ENCODE measurements at regions of chr15 and their contacts with region 1.

Region 1: DNA sequence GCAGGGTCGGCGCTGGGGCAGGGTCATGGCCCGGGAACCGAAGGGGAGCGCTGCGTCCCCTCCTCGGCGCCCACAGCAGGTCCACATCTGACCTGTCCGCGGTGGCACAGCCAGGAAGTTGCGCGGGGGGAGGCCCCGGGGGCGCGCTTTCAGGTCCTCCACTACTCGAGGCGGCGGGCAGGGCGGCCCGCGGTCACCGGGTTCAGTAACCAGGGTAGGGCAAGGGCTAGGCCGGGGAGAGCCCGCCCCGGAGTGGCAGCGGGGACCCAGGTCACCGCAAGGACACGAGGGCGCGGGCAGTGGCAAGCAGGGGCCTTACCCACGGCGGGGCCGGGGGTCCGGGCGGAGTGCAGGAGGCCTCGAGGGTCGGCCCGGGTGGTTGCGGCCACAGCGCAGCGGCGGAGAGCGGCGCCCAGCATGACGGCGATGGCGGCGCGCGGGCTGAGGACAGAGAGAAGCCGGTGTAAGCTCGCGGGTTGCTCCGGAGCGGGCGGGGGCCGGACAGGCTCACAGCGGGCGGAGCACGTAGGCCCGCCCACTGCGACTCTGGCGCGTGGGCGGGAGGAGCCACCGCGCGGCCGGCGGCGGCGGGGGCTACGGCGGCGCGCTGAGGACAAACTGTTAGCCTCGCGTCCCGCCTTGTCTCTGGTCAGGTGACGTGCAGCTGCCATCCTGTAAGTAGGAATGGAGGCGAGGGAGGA is at the start of gene COX5A:
- DNase-seq: peak; percentile 92 to 95 (median 93)
- H3K4me3 ChIP-seq: peak within 1 kb of the TSS; percentile 41 to 96
- H3K4me3 Mint-ChIP-seq: peak within 1 kb of the TSS; percentile 88 to 95 (median 94)
- H3K27ac ChIP-seq: peak within 1 kb of the TSS; percentile 79
- H3K27ac Mint-ChIP-seq: peak within 1 kb of the TSS; percentile 88 to 96 (median 92)
- H3K4me1 ChIP-seq: peaks cover 38% of the 10 kb centered on the region
- H3K4me1 Mint-ChIP-seq: peaks cover 21 to 40% (median 28%) of the 10 kb centered on the region in 4 donors
- H3K27me3 ChIP-seq: no peaks in the 10 kb centered on the region
- H3K27me3 Mint-ChIP-seq: no peaks in the 10 kb centered on the region
- total RNA-seq, gene COX5A: 66.8 to 74.4 TPM

Region 2: GRCh38 chr15:74615508-74616365 is 322.0 kb before region 1 on chr15 and contains the start of gene CLK3:
- CTCF ChIA-PET with region 1: no interaction called
- POLR2A ChIA-PET with region 1: interaction called, 12 read pairs
- intact Hi-C with region 1: loop called (anchors 1 kb)
- DNase-seq: peak; percentile 95 to 97 (median 96)
- H3K4me3 ChIP-seq: peak within 1 kb of the TSS; percentile 98 to 100
- H3K4me3 Mint-ChIP-seq: peak within 1 kb of the TSS; percentile 92 to 98 (median 94)
- H3K27ac ChIP-seq: peak within 1 kb of the TSS; percentile 99
- H3K27ac Mint-ChIP-seq: peak within 1 kb of the TSS; percentile 98 to 99 (median 98)
- H3K4me1 ChIP-seq: peaks cover 44% of the 10 kb centered on the region
- H3K4me1 Mint-ChIP-seq: peaks cover 28 to 59% (median 31%) of the 10 kb centered on the region in 4 donors
- H3K27me3 ChIP-seq: no peaks in the 10 kb centered on the region
- H3K27me3 Mint-ChIP-seq: no peaks in the 10 kb centered on the region
- total RNA-seq, gene CLK3: 163 to 167 TPM

Region 3: DNA sequence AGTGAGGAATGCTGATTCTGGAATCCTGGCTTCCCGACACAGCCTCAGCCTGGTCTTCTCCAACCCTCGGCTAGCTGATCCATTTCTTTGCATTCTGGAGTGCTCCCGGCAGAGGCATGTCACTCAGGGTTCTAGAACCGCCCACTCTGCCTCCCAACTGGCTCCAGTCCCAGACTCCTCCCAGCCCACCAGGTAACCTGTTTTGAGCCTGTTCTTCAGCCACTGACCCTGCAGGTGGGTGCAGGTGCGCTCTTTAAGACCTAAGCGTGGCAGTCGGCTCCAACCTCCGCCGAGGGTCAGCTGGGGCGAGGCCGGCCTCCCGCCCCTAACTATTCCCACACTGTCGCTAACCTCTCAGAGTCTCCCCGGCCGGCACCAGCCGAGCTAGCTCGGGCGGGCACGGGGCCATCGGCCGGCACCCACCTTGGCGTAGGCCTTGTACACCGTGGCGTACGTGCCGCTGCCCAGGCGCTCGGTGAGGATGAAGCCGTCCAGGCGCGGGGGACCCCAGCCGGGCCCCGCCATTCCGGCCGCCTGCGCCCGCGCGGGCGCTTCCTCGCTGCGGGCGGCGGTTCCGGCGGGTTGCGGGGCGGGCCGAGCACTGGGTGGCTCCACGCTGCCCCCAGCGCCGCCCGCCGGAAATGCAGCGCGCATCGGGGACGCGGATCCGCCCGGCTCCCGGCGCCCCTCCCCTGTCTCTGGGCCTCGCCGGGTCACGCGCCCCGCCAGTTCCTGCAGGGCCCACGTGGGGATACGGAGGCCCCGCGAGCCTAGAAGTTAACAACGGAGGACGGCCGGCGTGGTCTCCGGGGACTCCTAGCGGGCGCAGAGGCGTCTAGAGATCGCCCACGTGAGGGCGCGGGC is 94.9 kb before region 1 on chr15 and contains the start of gene ULK3:
- CTCF ChIA-PET with region 1: interaction called, 4 read pairs
- POLR2A ChIA-PET with region 1: interaction called, 10 read pairs
- intact Hi-C with region 1: loop called (anchors 1 kb)
- DNase-seq: peak; percentile 92 to 94 (median 93)
- H3K4me3 ChIP-seq: peak within 1 kb of the TSS; percentile 81 to 83
- H3K4me3 Mint-ChIP-seq: peak within 1 kb of the TSS; percentile 87 to 92 (median 91)
- H3K27ac ChIP-seq: peak within 1 kb of the TSS; percentile 77
- H3K27ac Mint-ChIP-seq: peak within 1 kb of the TSS; percentile 91 to 97 (median 93)
- H3K4me1 ChIP-seq: peaks cover 52% of the 10 kb centered on the region
- H3K4me1 Mint-ChIP-seq: peaks cover 37 to 57% (median 46%) of the 10 kb centered on the region in 4 donors
- H3K27me3 ChIP-seq: no peaks in the 10 kb centered on the region
- H3K27me3 Mint-ChIP-seq: no peaks in the 10 kb centered on the region
- total RNA-seq, gene ULK3: 84.9 to 88.3 TPM

Region 4: GRCh38 chr15:74889883-74890664 is 47.7 kb before region 1 on chr15 and contains the start of gene MPI:
- CTCF ChIA-PET with region 1: interaction called, 3 read pairs
- POLR2A ChIA-PET with region 1: interaction called, 6 read pairs
- intact Hi-C with region 1: loop called (anchors 5 kb)
- DNase-seq: peak; percentile 78 to 86 (median 79)
- H3K4me3 ChIP-seq: peak within 1 kb of the TSS; percentile 94 to 99
- H3K4me3 Mint-ChIP-seq: peak within 1 kb of the TSS; percentile 87 to 97 (median 94)
- H3K27ac ChIP-seq: peak within 1 kb of the TSS; percentile 78
- H3K27ac Mint-ChIP-seq: peak within 1 kb of the TSS; percentile 80 to 97 (median 94)
- H3K4me1 ChIP-seq: peaks cover 58% of the 10 kb centered on the region
- H3K4me1 Mint-ChIP-seq: peaks cover 30 to 54% (median 42%) of the 10 kb centered on the region in 4 donors
- H3K27me3 ChIP-seq: no peaks in the 10 kb centered on the region
- H3K27me3 Mint-ChIP-seq: no peaks in the 10 kb centered on the region
- total RNA-seq, gene MPI: 70.4 to 73.1 TPM

Region 5: DNA sequence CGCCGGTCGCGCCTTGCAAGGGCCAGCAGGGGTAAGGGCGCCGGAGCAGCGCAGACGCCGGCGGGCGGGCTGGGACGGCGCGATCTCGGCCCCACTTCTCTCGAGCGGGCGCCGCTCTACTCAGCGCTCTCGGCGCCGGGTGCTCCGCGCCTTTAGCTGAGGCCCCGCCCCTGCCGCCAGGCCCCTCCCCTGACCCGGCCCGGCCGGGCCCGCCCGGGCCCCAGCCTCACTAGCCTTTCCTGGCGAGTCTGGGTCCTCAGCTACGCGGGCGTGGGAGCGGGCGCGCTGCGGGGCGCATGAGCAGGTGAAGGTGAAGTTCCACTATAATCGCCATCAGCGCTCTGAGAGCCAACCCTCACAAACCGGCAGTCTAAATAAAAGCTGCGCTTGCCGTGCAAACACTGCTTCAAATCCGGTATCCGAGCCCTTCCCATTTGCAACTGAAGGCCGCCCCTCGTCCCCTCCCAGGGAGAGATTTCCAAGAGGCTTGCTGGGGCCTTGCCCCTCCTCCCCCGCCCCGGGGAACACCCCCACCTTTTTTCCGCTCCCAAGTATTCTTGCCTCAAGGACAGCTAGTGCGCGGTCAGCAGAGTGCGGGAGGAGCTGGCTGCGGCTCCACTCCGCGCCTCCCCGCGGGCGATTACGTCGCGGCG is 19.0 kb after region 1 on chr15 and contains the start of gene RPP25:
- CTCF ChIA-PET with region 1: interaction called, 4 read pairs
- POLR2A ChIA-PET with region 1: interaction called, 12 read pairs
- intact Hi-C with region 1: loop called (anchors 1 kb)
- DNase-seq: peak; percentile 43 to 56 (median 52)
- H3K4me3 ChIP-seq: peak within 1 kb of the TSS; percentile 12 to 68
- H3K4me3 Mint-ChIP-seq: peak within 1 kb of the TSS; percentile 75 to 82 (median 80)
- H3K27ac ChIP-seq: no peak within 1 kb of the TSS
- H3K27ac Mint-ChIP-seq: no peak within 1 kb of the TSS
- H3K4me1 ChIP-seq: peaks cover 40% of the 10 kb centered on the region
- H3K4me1 Mint-ChIP-seq: peaks cover 6 to 35% (median 19%) of the 10 kb centered on the region in 4 donors
- H3K27me3 ChIP-seq: peaks cover 19% of the 10 kb centered on the region
- H3K27me3 Mint-ChIP-seq: peaks cover 19 to 20% of the 10 kb centered on the region in 2 donors
- total RNA-seq, gene RPP25: 2.6 to 2.8 TPM

Region 6: GRCh38 chr15:75201609-75202250 is 264.0 kb after region 1 on chr15 and contains the start of gene C15orf39:
- CTCF ChIA-PET with region 1: interaction called, 3 read pairs
- POLR2A ChIA-PET with region 1: no interaction called
- intact Hi-C with region 1: loop called (anchors 1 kb)
- DNase-seq: peak; percentile 71 to 87 (median 83)
- H3K4me3 ChIP-seq: peak within 1 kb of the TSS; percentile 65 to 70
- H3K4me3 Mint-ChIP-seq: peak within 1 kb of the TSS; percentile 89 to 97 (median 94)
- H3K27ac ChIP-seq: peak within 1 kb of the TSS; percentile 69
- H3K27ac Mint-ChIP-seq: peak within 1 kb of the TSS; percentile 90 to 96 (median 93)
- H3K4me1 ChIP-seq: peaks cover 40% of the 10 kb centered on the region
- H3K4me1 Mint-ChIP-seq: peaks cover 16 to 58% (median 30%) of the 10 kb centered on the region in 4 donors
- H3K27me3 ChIP-seq: no peaks in the 10 kb centered on the region
- H3K27me3 Mint-ChIP-seq: no peaks in the 10 kb centered on the region
- total RNA-seq, gene C15orf39: 25.9 to 27.0 TPM

Region 7: DNA sequence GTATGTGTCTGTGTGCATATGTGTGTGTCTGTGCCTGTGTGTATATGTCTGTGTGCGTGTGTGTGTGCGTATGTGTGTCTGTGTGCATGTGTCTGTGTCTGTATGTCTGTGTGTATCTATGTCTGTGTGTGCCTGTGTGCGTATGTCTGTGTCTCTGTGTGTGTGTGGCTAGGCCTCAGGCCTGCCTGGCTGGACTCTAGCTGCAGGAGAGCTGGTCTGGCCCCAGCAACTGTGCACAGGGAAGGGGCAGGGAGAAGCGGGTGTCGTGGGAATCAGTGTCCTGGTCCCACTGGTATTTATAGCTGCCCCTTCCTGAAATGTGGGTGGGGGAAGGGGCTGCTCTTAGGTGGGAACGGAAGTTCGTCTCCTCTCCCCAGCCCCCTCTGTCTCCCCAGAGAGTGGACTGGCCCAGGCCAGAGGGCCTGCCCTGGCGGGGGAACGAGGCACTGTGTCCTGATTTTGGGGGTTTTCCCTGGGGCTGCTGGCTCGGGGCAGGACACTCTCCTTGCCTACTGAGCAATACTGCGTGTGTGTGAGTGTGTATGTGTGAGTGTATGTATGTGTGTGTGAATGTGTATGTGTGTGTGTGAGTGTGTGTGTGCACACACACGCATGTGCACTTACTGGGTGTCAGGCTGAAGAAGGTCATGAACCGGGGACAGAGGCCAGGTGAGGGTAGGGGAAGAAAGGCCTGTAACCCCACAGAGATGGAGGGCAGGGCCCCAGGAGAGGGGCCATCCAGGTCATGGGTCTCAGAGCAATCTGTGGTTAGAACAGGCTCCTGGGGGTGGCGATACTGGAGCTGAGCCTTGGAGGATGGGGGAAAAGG is 768.3 kb after region 1 on chr15:
- CTCF ChIA-PET with region 1: no interaction called
- POLR2A ChIA-PET with region 1: no interaction called
- intact Hi-C with region 1: no loop called
- DNase-seq: no peak
- H3K4me3 ChIP-seq: no peak overlapping the region
- H3K4me3 Mint-ChIP-seq: no peak overlapping the region
- H3K27ac ChIP-seq: no peak overlapping the region
- H3K27ac Mint-ChIP-seq: peak overlapping the region in 1 of 7 donors; percentile 11
- H3K4me1 ChIP-seq: no peaks in the 10 kb centered on the region
- H3K4me1 Mint-ChIP-seq: no peaks in the 10 kb centered on the region
- H3K27me3 ChIP-seq: no peaks in the 10 kb centered on the region
- H3K27me3 Mint-ChIP-seq: no peaks in the 10 kb centered on the region